ENCODE measurements at regions of chr2 and their contacts with region 1.

Region 1: DNA sequence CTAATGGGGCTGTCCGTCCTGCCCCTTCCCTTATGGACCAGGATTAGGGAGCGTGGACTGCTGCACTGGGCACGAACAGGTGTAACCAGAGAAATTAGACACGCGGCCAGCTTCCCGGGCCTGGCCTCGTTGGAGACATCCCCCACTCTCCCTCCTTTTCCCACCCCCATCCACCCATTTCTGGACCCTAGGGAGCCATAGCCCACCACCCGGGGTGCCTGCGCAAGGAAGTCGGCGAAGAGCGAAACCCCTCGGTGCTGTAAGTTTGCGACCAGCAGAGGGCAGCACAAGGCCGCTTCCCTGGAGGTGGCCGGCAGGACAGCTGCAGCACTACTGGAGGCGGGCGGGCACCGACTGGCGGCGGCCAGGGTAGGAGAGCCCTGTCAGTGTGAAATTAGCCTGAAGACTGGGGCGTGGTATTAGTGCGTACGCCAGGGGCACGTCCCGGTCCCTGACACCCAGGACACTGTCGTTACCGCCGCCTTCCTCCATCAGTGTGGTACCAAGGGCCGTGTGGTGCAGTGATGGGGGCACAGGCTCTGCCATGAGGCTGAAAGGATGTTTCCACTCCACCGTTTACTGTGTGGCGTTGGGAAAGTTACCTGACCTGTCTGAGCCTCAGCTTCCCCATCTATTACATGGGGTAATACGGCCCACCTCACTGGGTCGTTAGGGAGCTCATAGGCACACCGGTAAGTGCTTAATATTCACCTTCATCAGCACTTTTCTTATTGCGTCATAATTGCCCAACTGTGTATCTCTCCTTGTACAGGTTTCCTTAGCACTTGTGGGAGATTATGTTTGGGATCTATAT is 36.0 kb upstream of the CD207 start:
- DNase-seq: peak; percentile 87
- H3K4me3 Mint-ChIP-seq: no peak overlapping the region
- H3K27ac Mint-ChIP-seq: no peak overlapping the region
- H3K4me1 Mint-ChIP-seq: peaks cover 5% of the 10 kb centered on the region
- H3K27me3 Mint-ChIP-seq: peaks cover 69% of the 10 kb centered on the region

Region 2: GRCh38 chr2:70919672-70920366 is 48.2 kb after region 1 on chr2:
- CTCF ChIA-PET with region 1: interaction called, 98 read pairs
- DNase-seq: peak; percentile 80
- H3K4me3 Mint-ChIP-seq: no peak overlapping the region
- H3K27ac Mint-ChIP-seq: no peak overlapping the region
- H3K4me1 Mint-ChIP-seq: no peaks in the 10 kb centered on the region
- H3K27me3 Mint-ChIP-seq: peaks cover 30% of the 10 kb centered on the region

Region 3: GRCh38 chr2:70942396-70943204 is 71.0 kb after region 1 on chr2:
- CTCF ChIA-PET with region 1: interaction called, 71 read pairs
- DNase-seq: peak; percentile 1
- H3K4me3 Mint-ChIP-seq: no peak overlapping the region
- H3K27ac Mint-ChIP-seq: no peak overlapping the region
- H3K4me1 Mint-ChIP-seq: peaks cover 6% of the 10 kb centered on the region
- H3K27me3 Mint-ChIP-seq: peaks cover 60% of the 10 kb centered on the region

Region 4: GRCh38 chr2:70948337-70949003 is 76.9 kb after region 1 on chr2:
- CTCF ChIA-PET with region 1: interaction called, 71 read pairs
- DNase-seq: peak; percentile 83
- H3K4me3 Mint-ChIP-seq: peak overlapping the region; percentile 39
- H3K27ac Mint-ChIP-seq: no peak overlapping the region
- H3K4me1 Mint-ChIP-seq: peaks cover 12% of the 10 kb centered on the region
- H3K27me3 Mint-ChIP-seq: peaks cover 53% of the 10 kb centered on the region